IMR-90 (cell line): ENCODE measurements at regions of chr1 and their contacts with region 1.

Region 1: GRCh38 chr1:42146626-42147320 is 6.4 kb upstream of the GUCA2B start:
- DNase-seq: peak; percentile 45
- ATAC-seq: peak; percentile 90
- H3K4me3 ChIP-seq: no peak overlapping the region
- H3K27ac ChIP-seq: no peak overlapping the region
- H3K4me1 ChIP-seq: no peaks in the 10 kb centered on the region
- H3K27me3 ChIP-seq: peaks cover 56% of the 10 kb centered on the region
- CTCF ChIP-seq: peak; percentile 83
- POLR2A ChIP-seq: no peak
- RAD21 ChIP-seq: peak; percentile 89

Region 2: GRCh38 chr1:41573785-41574713 is 572.7 kb before region 1 on chr1:
- CTCF ChIA-PET with region 1: no interaction called
- POLR2A ChIA-PET with region 1: no interaction called
- dilution Hi-C with region 1: no loop called
- in situ Hi-C with region 1: loop called (anchors 10 kb)
- intact Hi-C with region 1: loop called (anchors 2 kb)
- DNase-seq: peak; percentile 80
- ATAC-seq: peak; percentile 99
- H3K4me3 ChIP-seq: no peak overlapping the region
- H3K27ac ChIP-seq: no peak overlapping the region
- H3K4me1 ChIP-seq: no peaks in the 10 kb centered on the region
- H3K27me3 ChIP-seq: no peaks in the 10 kb centered on the region
- CTCF ChIP-seq: peak; percentile 99
- POLR2A ChIP-seq: peak; percentile 57; the same call in 1 of the 2 replicates
- RAD21 ChIP-seq: peak; percentile 100

Region 3: GRCh38 chr1:42335050-42335808 is 188.5 kb after region 1 on chr1 and contains the start of gene FOXJ3:
- CTCF ChIA-PET with region 1: no interaction called
- POLR2A ChIA-PET with region 1: no interaction called
- dilution Hi-C with region 1: no loop called
- in situ Hi-C with region 1: no loop called
- intact Hi-C with region 1: loop called (anchors 1 kb)
- DNase-seq: peak; percentile 96
- ATAC-seq: peak; percentile 93
- H3K4me3 ChIP-seq: peak within 1 kb of the TSS; percentile 93
- H3K27ac ChIP-seq: peak within 1 kb of the TSS; percentile 82
- H3K4me1 ChIP-seq: no peaks in the 10 kb centered on the region
- H3K27me3 ChIP-seq: no peaks in the 10 kb centered on the region
- CTCF ChIP-seq: 0 out of 2 replicates have a peak, but pooled peaks have one; percentile 2
- POLR2A ChIP-seq: peak; percentile 72
- RAD21 ChIP-seq: peak; percentile 21; the same call in 1 of the 2 replicates
- total RNA-seq, gene FOXJ3: 28.1 and 30.5 TPM in 2 replicates

Region 4: DNA sequence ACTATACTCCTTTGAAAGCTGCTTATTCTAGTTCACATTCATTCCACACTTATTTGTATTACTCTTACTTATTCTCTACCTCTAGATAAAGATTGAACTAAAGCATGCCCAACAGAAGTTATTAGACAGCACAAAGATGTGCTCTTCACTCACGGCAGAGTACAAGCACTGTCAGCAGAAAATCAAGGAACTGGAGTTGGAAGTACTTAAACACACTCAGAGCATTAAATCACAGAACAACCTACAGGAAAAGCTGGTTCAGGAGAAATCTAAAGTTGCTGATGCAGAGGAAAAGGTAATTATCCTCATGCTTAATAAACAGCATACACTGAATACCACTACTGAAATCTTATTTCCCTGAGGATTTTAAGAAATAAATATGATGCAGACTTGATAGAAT is 430.2 kb after region 1 on chr1:
- CTCF ChIA-PET with region 1: no interaction called
- POLR2A ChIA-PET with region 1: no interaction called
- dilution Hi-C with region 1: no loop called
- in situ Hi-C with region 1: no loop called
- intact Hi-C with region 1: loop called (anchors 5 kb)
- DNase-seq: no peak
- ATAC-seq: no peak
- H3K4me3 ChIP-seq: no peak overlapping the region
- H3K27ac ChIP-seq: no peak overlapping the region
- H3K4me1 ChIP-seq: no peaks in the 10 kb centered on the region
- H3K27me3 ChIP-seq: peaks cover 3% of the 10 kb centered on the region
- CTCF ChIP-seq: no peak
- POLR2A ChIP-seq: no peak
- RAD21 ChIP-seq: no peak

Region 5: GRCh38 chr1:42681741-42682483 is 535.1 kb after region 1 on chr1 and contains the start of gene YBX1:
- CTCF ChIA-PET with region 1: no interaction called
- POLR2A ChIA-PET with region 1: no interaction called
- dilution Hi-C with region 1: no loop called
- in situ Hi-C with region 1: no loop called
- intact Hi-C with region 1: loop called (anchors 10 kb)
- DNase-seq: peak; percentile 99
- ATAC-seq: peak; percentile 90
- H3K4me3 ChIP-seq: peak within 1 kb of the TSS; percentile 84
- H3K27ac ChIP-seq: peak within 1 kb of the TSS; percentile 82
- H3K4me1 ChIP-seq: peaks cover 13% of the 10 kb centered on the region; the same call in 1 of the 2 replicates
- H3K27me3 ChIP-seq: no peaks in the 10 kb centered on the region
- CTCF ChIP-seq: no peak
- POLR2A ChIP-seq: peak; percentile 73
- RAD21 ChIP-seq: no peak
- total RNA-seq, gene YBX1: 843 and 1,307 TPM in 2 replicates

Region 6: GRCh38 chr1:43602990-43603389 is 1456.2 kb after region 1 on chr1:
- CTCF ChIA-PET with region 1: no interaction called
- POLR2A ChIA-PET with region 1: no interaction called
- dilution Hi-C with region 1: no loop called
- in situ Hi-C with region 1: no loop called
- intact Hi-C with region 1: no loop called
- DNase-seq: no peak
- ATAC-seq: no peak
- H3K4me3 ChIP-seq: no peak overlapping the region
- H3K27ac ChIP-seq: no peak overlapping the region
- H3K4me1 ChIP-seq: no peaks in the 10 kb centered on the region
- H3K27me3 ChIP-seq: no peaks in the 10 kb centered on the region
- CTCF ChIP-seq: no peak
- POLR2A ChIP-seq: no peak
- RAD21 ChIP-seq: no peak